IMR-90 (cell line): ENCODE measurements at regions of chr1 and their contacts with region 1.

Region 1: DNA sequence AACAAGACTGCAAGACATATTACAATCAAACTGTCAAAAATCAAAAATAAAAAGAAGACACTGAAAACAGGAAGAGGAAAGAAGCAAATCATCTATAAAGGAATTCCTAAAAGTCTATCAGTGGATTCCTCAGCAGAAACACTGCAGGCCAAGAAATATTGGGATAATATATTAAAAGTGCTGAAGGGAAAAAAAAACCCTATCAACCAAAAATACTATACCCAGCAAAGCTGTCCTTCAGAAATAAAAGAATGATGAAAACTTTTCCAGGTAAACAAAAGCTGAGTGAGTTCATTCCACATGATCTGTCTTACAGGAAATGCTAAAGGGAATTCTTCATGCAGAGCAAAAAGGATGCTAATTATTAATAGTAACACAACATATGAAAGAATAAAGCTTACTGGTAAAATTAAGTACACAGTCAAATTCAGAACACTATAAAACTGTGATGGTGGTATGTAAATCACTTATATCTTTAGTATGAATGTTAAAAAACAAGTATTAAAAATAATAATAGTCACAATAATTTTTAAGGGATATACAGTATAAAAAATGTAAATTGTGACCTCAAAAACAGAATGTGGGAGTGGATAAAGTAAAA is 12.9 kb upstream of the ACP6 start:
- DNase-seq: no peak
- ATAC-seq: no peak
- H3K4me3 ChIP-seq: no peak overlapping the region
- H3K27ac ChIP-seq: no peak overlapping the region
- H3K4me1 ChIP-seq: no peaks in the 10 kb centered on the region
- H3K27me3 ChIP-seq: no peaks in the 10 kb centered on the region
- CTCF ChIP-seq: no peak
- POLR2A ChIP-seq: no peak
- RAD21 ChIP-seq: no peak

Region 2: DNA sequence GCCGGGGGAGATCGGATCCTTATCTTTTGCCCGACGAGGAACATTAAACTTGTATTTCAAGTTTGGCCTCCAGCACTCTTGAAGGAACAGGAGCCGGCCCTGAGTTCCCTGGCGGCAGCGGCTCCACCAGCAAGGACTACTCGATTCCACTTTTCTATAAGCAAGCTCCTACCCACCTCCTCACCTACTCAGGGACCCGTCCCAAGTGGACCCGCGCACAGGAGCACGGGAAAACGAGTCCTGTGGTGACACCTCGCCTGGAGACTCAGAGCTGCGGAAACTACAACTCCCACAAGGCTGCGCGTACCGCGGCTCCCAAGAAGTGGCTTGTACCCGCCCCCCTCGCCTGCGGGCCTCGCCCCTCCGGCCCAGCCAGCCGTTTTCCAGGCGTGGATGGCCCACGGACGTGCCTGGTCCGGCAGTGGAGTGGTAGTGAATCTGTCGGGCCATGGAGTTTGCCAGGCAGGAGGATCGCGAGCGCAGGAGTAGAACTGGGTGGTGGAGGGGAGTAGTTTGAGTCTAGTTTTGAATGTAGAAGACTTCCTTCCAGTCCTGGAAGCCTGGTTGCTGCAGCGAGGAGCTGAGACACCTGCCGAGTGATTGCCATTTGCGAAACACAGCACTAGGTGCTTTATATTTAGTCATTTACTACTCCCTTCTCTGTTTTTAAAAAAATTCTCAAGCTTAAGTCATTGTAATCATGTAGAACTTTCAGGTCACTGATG is 12.8 kb before region 1 on chr1 and contains the start of gene ACP6:
- CTCF ChIA-PET with region 1: no interaction called
- POLR2A ChIA-PET with region 1: no interaction called
- dilution Hi-C with region 1: no loop called
- in situ Hi-C with region 1: no loop called
- intact Hi-C with region 1: loop called (anchors 2 kb)
- DNase-seq: peak; percentile 94
- ATAC-seq: peak; percentile 98
- H3K4me3 ChIP-seq: peak within 1 kb of the TSS; percentile 64
- H3K27ac ChIP-seq: peak within 1 kb of the TSS; percentile 55
- H3K4me1 ChIP-seq: 0 out of 2 replicates have a peak, but pooled peaks cover 2% of the 10 kb centered on the region
- H3K27me3 ChIP-seq: no peaks in the 10 kb centered on the region
- CTCF ChIP-seq: no peak
- POLR2A ChIP-seq: no peak
- RAD21 ChIP-seq: no peak
- total RNA-seq, gene ACP6: 2.5 and 3.6 TPM in 2 replicates

Region 3: DNA sequence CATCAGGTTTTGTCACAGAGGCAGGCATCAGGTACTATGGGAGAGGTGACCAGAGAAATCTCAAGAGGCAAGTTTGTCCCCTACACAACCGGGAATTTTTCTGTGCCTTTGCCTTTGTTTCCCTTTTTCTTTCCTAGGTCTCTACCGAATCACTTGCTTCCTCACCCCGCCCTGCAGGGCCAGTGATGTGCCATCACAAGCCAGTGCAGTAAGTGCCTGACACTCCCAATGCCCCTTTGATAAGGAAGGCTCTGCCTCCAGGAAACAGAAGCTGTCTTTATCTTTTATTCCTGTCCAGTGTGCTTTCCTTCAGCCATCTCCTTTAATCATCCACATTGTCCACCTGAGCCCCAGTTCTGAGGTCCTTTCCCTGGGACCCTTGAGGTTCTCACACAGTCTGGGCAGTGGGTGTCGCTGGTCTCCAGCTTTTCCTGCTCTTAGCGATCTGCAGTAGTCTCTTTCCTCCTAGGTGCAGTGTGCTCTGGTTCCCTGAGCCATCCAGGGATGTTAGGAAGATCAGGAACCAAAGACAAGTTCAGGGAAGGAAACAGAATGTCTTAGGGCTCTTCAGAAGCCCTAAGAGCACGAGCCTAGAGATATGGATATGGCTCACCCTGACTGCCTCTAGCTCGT is 40.5 kb after region 1 on chr1:
- CTCF ChIA-PET with region 1: no interaction called
- POLR2A ChIA-PET with region 1: no interaction called
- dilution Hi-C with region 1: no loop called
- in situ Hi-C with region 1: no loop called
- intact Hi-C with region 1: no loop called
- DNase-seq: no peak
- ATAC-seq: no peak
- H3K4me3 ChIP-seq: no peak overlapping the region
- H3K27ac ChIP-seq: no peak overlapping the region
- H3K4me1 ChIP-seq: no peaks in the 10 kb centered on the region
- H3K27me3 ChIP-seq: no peaks in the 10 kb centered on the region; the same call in 1 of the 2 replicates
- CTCF ChIP-seq: no peak
- POLR2A ChIP-seq: no peak
- RAD21 ChIP-seq: 0 out of 2 replicates have a peak, but pooled peaks have one; percentile 21